MCF 10A (cell line): ENCODE measurements at regions of chr9 and their contacts with region 1.

Region 1: DNA sequence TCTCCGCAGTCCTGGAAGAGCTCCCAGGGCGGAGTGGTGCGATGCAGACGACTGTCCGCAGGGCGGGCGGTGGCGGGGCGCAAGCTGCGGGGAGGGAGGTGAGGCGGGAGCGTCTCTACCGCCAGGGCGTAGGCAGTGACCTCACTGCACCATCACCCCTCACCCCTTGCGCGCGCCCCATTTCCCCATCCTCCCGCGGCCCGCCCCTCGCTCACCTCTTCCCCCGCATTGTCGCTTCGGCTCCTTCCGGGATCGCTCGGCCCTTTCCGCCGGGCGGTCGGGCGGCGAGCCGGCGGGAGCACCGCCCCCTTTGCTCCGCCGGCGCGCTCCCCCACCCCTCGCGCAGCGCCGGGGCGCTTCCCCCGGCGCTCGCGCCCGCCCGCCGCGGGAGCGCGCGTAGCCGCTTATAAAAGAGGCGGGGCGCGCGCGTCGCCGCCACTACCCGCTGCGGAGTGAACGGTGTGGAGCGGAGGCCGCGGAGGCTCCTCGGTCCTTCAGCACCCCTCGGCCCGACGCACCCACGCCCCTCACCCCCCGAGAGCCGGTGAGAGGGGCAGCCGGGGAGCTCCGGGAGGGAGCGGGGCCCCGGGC is at the start of gene SPTAN1:
- DNase-seq: peak; percentile 86
- H3K4me3 Mint-ChIP-seq: no peak within 1 kb of the TSS
- H3K27ac Mint-ChIP-seq: peak within 1 kb of the TSS; percentile 90
- H3K4me1 Mint-ChIP-seq: peaks cover 17% of the 10 kb centered on the region
- H3K27me3 Mint-ChIP-seq: no peaks in the 10 kb centered on the region
- CTCF ChIP-seq: no peak
- total RNA-seq, gene SPTAN1: 254 and 280 TPM in 2 replicates

Region 2: DNA sequence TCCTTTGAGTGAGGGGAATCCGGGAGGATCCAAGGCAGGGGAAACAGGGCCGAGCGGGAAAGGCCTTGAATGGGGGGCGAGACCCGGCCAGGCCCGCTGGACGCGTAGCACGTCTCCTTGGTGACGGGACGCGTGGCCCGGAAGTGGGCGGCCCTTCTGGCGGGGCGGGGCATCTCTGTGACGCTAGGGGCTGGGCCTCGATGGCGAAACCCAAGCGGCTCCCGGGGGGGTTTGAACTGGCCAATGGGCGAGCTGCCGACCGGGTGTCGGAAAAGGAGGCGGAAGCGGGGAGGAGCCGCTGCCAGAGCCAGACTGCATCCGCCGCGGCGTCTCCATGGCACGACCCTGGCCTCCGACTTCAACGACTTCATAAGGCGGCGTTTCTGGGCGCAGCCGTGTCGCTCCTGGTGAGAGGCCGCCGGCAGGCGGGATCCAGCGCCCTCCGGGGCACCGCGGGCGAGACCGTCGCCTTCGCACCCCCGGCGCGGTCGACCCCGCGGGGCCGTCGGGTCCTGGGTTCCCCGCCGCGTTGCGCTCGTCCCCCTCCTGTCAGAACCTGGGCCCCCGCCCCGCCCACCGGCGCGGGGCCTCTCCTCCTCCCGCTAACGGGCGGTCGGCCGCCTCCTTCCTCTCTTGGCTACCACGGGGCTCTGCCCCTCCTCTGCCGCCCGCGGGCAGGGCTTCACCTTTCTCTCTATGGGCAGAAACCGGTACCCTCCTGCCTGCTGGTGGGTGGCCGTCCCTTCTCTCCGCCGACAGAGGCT is 96.2 kb before region 1 on chr9 and contains the start of gene ODF2:
- CTCF ChIA-PET with region 1: no interaction called
- POLR2A ChIA-PET with region 1: interaction called, 9 read pairs
- intact Hi-C with region 1: loop called (anchors 5 kb)
- DNase-seq: peak; percentile 95
- H3K4me3 Mint-ChIP-seq: peak within 1 kb of the TSS; percentile 98
- H3K27ac Mint-ChIP-seq: peak within 1 kb of the TSS; percentile 96
- H3K4me1 Mint-ChIP-seq: no peaks in the 10 kb centered on the region
- H3K27me3 Mint-ChIP-seq: no peaks in the 10 kb centered on the region
- CTCF ChIP-seq: no peak
- total RNA-seq, gene ODF2: 34.4 and 37.3 TPM in 2 replicates

Region 3: DNA sequence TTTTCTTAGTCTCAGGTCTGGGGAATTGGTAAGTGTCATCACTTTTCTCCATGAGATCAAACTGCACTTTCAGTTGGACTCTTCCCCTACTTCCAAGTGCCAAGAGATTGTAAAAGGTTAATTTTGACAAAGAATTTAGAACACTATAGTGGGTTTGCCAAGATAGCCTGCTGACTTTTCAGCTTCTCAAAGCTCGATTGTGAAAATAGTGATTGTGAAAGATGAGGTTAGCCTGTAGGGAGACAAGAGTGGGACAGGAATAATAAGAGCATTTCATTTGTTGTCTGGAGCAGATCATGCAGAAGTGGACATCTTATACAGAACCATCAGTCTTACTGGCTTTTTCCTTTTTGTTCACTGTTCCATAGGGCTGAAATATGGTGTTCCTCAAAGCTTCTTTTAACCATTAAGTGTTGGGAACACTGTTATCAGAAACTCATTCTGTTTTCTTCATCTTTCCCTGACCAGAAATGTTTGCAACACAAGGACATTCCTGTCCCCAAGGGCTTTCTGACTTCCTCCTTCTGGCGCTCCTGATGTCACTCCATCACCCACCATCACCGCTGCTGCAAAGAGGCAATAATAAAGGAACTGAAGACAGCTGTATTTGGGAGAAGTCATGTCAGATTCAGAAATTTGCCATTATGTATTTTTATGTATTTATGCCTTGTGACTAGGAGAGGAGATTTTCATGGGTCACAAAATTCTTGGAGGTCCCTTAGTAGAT is 11.5 kb before region 1 on chr9:
- CTCF ChIA-PET with region 1: interaction called, 4 read pairs
- POLR2A ChIA-PET with region 1: interaction called, 61 read pairs
- intact Hi-C with region 1: no loop called
- DNase-seq: no peak
- H3K4me3 Mint-ChIP-seq: no peak overlapping the region
- H3K27ac Mint-ChIP-seq: no peak overlapping the region
- H3K4me1 Mint-ChIP-seq: no peaks in the 10 kb centered on the region
- H3K27me3 Mint-ChIP-seq: no peaks in the 10 kb centered on the region
- CTCF ChIP-seq: no peak

Region 4: DNA sequence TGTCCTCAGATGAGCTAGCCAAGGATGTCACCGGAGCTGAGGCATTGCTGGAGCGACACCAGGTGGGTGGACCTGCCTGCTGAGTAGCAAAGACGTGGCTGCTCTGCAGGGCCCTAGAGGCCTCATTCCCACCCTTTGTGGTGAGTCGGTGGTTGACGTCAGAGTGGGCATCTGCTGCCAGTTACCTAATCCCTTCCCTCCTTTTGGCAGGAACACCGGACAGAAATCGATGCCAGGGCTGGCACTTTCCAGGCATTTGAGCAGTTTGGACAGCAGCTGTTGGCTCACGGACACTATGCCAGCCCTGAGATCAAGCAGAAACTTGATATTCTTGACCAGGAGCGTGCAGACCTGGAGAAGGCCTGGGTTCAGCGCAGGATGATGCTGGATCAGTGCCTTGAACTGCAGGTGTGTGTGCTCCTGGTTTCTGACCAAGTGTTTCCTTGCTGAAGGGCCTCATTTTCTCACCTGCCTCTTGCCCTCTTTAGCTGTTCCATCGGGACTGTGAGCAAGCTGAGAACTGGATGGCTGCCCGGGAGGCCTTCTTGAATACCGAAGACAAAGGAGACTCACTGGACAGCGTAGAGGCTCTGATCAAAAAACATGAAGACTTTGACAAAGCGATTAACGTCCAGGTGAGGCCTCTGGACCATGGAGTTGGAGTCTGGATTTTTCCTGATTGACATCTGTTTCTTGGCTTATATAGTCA is 55.5 kb after region 1 on chr9:
- CTCF ChIA-PET with region 1: interaction called, 5 read pairs
- POLR2A ChIA-PET with region 1: interaction called, 44 read pairs
- intact Hi-C with region 1: loop called (anchors 5 kb)
- DNase-seq: peak; percentile 99
- H3K4me3 Mint-ChIP-seq: no peak overlapping the region
- H3K27ac Mint-ChIP-seq: peak overlapping the region; percentile 87
- H3K4me1 Mint-ChIP-seq: peaks cover 22% of the 10 kb centered on the region
- H3K27me3 Mint-ChIP-seq: no peaks in the 10 kb centered on the region
- CTCF ChIP-seq: no peak

Region 5: DNA sequence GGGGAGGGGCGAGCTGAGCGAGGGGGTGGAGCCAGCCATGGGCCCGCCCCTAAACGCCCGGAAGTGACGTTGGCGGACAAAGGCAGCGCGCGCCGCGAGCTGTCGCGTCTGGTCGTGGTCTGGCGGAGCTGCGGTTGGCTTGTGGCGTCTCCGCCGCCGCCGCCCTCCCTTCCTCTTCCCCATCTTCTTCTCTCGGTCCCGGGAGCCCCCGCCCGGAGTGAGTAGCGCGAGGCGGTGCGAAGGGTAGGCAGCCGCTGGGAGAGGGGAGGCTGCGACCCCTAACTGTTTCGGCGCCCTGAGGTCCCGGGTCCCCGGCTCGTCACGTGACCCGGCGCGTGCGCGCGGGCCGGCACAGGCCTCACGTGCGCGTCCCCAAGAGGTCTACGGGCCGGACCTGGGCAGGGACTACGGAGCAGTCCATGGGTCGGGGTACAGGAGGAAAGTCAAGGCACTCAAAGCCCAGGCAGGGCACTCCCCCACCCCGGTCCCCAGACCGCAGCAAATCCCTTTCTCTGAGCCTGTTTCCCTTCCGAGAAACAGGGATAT is 1073.9 kb after region 1 on chr9 and contains the start of gene NTMT1:
- CTCF ChIA-PET with region 1: no interaction called
- POLR2A ChIA-PET with region 1: no interaction called
- intact Hi-C with region 1: loop called (anchors 10 kb)
- DNase-seq: peak; percentile 82
- H3K4me3 Mint-ChIP-seq: peak within 1 kb of the TSS; percentile 92
- H3K27ac Mint-ChIP-seq: peak within 1 kb of the TSS; percentile 72
- H3K4me1 Mint-ChIP-seq: peaks cover 33% of the 10 kb centered on the region
- H3K27me3 Mint-ChIP-seq: no peaks in the 10 kb centered on the region
- CTCF ChIP-seq: no peak
- total RNA-seq, gene NTMT1: 32.9 and 49.2 TPM in 2 replicates